RWPE1 (cell line): ENCODE measurements at regions of chr18 and their contacts with region 1.

Region 1: GRCh38 chr18:12271376-12272235 is 17.4 kb downstream of the CIDEA start:
- DNase-seq: peak; percentile 85
- H3K27ac ChIP-seq: peak overlapping the region; percentile 67
- CTCF ChIP-seq: peak; percentile 89

Region 2: DNA sequence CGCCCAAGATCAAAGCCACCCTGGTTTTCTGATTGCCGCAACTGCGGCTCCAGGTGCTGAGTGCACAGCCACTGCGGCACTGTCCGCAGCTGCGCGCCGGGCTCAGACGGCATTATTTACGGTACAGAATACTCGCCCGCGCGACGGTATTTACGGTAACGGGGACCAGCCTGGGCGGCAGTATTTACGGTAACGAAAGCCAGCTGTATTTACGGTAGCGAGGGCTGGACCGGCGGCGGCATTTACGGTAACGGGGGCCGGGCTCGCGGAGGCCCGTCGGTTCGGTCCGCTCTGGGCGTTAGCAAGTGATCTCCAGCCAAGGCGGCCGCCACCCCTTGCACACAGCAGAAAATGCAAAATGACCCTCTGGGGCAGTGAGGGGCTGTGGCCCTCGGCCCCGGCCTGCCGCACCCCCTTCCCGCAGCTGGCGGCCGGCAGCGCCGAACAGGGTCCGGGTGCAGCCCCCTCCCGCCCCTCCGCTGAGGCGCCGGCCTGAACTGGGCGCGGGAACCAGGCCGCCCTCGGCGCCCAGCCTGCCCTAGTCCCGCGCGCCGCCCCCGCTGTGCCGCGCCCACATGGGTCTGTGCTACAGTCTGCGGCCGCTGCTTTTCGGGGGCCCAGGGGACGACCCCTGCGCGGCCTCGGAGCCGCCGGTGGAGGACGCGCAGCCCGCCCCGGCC is 582.5 kb before region 1 on chr18 and contains the start of gene GNAL:
- CTCF ChIA-PET with region 1: interaction called, 10 read pairs
- POLR2A ChIA-PET with region 1: no interaction called
- DNase-seq: peak; percentile 76
- H3K27ac ChIP-seq: no peak within 1 kb of the TSS
- CTCF ChIP-seq: no peak

Region 3: DNA sequence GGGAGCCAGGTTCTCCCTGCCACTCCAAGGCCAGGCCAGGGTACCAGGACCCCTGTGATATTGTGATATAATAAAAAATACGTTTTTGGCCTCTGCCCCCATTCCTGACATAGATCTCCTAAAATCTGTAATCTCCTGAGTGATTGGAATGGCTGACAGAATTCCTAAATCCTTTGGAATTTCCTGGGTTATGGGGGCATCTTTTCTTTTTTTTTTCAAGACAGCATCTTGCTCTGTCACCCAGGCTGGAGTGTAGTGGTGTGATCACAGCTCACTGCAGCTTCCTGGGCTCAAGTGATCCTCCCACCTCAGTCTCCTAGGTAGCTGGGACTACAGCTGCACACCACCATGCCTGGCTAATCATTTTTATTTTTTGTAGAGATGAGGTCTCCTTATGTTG is 10.3 kb after region 1 on chr18:
- CTCF ChIA-PET with region 1: interaction called, 26 read pairs
- POLR2A ChIA-PET with region 1: no interaction called
- DNase-seq: no peak
- H3K27ac ChIP-seq: peak overlapping the region; percentile 69
- CTCF ChIP-seq: no peak

Region 4: DNA sequence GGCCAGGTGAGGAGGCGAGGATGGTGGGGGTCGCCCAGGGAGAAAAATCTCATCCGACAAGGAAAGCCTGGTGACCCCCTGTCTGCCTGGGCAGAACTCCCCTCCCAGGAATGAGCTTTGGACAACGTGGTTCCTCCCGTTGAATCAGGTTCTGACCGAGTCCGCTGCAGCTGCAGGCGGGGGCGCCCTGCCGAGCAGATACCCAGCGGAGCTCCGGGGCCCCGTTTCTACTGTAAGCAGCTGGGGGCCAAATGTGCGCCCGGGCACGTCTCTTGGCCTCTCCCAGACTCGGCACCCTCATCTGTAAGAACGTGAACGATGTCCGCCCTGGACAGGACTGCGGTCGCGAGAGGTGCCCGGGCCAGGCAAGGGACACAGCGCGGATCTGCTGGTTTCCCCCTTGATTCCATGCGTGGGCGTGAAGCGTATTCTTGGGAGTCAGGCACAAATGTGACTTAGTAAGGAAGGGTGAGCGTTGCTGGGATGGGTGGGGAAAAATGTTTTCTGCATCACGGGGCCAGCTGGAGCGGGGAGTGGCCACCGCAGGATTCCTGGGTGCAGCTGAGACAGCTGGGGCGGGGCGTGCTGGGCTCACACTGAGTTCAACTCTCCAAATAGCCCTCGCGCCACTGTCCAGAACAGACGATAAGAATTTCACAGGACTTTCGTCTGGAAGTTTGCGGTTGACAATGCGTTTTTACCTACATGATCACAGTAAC is 16.2 kb after region 1 on chr18:
- CTCF ChIA-PET with region 1: interaction called, 26 read pairs
- POLR2A ChIA-PET with region 1: no interaction called
- DNase-seq: peak; percentile 86
- H3K27ac ChIP-seq: peak overlapping the region; percentile 91
- CTCF ChIP-seq: no peak

Region 5: DNA sequence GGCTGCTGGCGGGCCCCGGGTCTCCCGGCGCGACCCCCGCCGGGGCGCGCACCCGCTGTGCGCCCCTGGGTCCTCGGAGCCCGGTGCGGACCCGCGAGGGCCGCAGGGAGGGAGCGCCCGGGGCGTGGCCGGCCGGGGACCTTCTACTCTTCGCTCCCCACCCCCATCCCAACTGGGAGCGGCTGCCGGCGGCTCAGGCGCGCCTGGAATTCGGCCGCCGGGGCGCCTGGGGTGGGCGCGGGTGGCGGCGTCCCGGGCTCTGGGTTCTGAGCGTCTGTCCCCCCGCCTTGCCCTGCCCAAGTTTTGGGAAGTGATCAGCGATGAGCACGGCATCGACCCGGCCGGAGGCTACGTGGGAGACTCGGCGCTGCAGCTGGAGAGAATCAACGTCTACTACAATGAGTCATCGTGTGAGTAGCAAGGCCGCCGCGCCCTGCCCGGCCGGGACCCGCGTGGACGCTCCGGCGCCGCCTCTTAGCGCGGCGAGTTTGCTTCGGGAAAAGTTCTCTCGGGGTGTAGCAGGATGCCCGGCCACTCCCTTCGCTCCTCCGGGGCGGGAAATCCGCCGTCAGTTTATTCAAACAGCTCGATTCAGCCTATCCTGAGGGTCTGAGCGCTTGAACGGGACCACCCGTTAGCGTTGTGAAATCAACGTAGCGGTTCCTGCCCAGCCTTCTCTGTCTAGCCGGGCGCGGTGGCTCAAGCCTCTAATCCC is 36.9 kb after region 1 on chr18:
- CTCF ChIA-PET with region 1: interaction called, 15 read pairs
- POLR2A ChIA-PET with region 1: interaction called, 3 read pairs
- DNase-seq: peak; percentile 80
- H3K27ac ChIP-seq: peak overlapping the region; percentile 97
- CTCF ChIP-seq: no peak